Motor neuron (in vitro differentiated cells): ENCODE measurements at regions of chr14 and their contacts with region 1.

Region 1: DNA sequence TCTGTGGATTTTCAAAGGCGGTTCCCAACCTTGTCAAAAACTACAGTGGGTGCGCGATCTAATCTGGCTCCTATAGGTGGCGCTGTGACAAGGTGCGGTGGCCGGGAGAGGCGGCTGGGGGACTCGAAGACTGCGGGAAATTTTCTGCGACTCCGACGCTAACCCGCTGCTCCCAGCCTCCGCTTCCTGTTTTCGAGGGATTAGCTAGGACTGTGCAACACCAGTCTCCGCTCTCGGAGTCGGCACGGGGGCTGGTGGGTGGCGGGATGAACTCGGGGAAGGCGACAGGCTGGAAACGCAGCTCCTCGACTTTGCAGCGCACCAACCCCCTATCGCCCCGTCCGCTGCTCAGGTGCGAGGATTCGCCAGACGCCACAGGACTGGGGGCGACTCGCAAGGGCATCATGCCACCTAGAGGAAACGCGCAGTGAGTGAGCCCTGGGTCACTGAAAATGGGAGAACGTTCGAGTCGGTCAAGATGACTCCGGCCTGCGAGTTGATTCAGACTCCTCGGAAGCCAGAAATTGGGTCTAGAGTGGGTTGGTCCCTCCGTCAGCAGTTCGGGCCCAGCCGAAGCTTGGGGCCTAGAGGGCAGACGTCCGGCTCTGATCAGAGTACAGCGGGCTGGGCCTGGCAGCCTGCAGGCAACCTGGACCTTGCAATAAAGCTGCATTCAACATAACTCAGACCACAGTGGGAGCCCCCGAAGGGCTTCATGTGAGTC is 5.5 kb upstream of the PAX9 start:
- ATAC-seq: peak in 7 of 8 experiments; percentile 37 to 56 (median 50)
- H3K4me3 ChIP-seq: peak overlapping the region in 1 of 5 donors; percentile 5
- H3K27ac ChIP-seq: no peak overlapping the region
- H3K4me1 ChIP-seq: peaks cover 6 to 12% of the 10 kb centered on the region in 2 donors

Region 2: DNA sequence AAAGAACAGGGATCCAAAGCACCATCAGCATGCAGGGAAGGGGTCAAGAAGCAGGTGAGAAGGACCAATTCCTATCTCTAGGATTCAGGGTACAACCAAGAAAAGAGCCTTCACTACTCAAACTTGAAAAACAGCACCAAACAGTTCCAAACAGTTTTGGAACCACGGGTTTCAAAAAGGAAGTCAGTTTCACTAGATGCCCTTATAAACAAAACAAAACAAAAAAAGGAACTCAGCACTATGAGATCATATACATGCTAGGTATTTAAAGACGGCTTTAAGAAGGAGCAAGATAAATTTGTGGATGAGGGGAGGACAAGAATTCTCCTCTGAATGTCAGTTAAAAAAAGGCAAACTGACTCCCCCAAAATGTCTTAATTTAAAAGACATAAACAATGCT is 1116.2 kb before region 1 on chr14:
- in situ Hi-C with region 1: no loop called
- ATAC-seq: no peak
- H3K4me3 ChIP-seq: no peak overlapping the region
- H3K27ac ChIP-seq: no peak overlapping the region
- H3K4me1 ChIP-seq: peaks cover 6 to 7% of the 10 kb centered on the region in 2 donors

Region 3: GRCh38 chr14:36751139-36751538 is 95.0 kb after region 1 on chr14:
- in situ Hi-C with region 1: loop called in 1 of 9 experiments (anchors 10 kb)
- ATAC-seq: no peak
- H3K4me3 ChIP-seq: no peak overlapping the region
- H3K27ac ChIP-seq: no peak overlapping the region
- H3K4me1 ChIP-seq: no peaks in the 10 kb centered on the region

Region 4: DNA sequence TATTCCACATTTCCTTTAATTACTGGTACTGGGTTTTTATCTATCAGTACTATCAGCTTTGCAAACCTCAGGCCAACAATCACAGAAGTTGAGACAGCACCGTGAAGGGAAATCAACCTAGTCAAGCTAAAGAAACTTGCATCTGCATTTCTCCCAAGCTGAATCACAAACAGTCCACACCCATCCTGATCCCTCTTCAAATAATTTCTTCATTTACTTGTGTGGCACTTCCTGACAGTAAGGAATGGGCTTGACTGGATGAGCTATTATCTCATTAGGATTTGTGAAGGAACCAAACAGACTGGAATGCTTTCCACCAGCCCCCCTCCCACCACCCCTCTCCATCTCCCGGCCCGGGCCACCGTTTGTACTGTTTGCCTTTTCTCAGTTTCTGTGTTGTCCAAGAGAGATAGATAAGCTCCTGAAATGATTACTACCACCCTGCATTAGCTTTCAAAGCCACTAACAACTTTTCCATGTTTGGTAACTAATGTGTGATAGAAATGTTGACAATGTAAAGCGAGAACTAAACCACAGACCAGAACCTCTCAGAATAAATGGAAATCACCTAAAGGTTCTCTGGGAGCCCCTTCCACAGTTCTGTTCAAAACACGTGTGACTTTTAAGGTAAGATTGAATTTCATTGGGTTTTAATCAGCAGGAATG is 280.0 kb after region 1 on chr14:
- in situ Hi-C with region 1: loop called in 3 of 9 experiments (anchors 10 to 25 kb)
- ATAC-seq: peak in 3 of 8 experiments; percentile 63 to 96 (median 95)
- H3K4me3 ChIP-seq: no peak overlapping the region
- H3K27ac ChIP-seq: no peak overlapping the region
- H3K4me1 ChIP-seq: no peaks in the 10 kb centered on the region